GM12878 (cell line): ENCODE measurements at regions of chr17 and their contacts with region 1.

Region 1: GRCh38 chr17:45307290-45308015 is 9.4 kb downstream of the MAP3K14 start:
- DNase-seq: peak; percentile 90
- ATAC-seq: peak; percentile 64
- H3K4me3 ChIP-seq: peak overlapping the region; percentile 14; the same call in 1 of the 2 replicates
- H3K27ac ChIP-seq: peak overlapping the region; percentile 94
- H3K4me1 ChIP-seq: peaks cover 82% of the 10 kb centered on the region
- H3K27me3 ChIP-seq: no peaks in the 10 kb centered on the region
- CTCF ChIP-seq: 0 out of 6 replicates have a peak, but pooled peaks of 1 of the 3 experiments have one; percentile 5
- EP300 ChIP-seq: peak; percentile 75 to 78; a peak in 3 of 4 replicates
- POLR2A ChIP-seq: no peak
- RAD21 ChIP-seq: no peak

Region 2: DNA sequence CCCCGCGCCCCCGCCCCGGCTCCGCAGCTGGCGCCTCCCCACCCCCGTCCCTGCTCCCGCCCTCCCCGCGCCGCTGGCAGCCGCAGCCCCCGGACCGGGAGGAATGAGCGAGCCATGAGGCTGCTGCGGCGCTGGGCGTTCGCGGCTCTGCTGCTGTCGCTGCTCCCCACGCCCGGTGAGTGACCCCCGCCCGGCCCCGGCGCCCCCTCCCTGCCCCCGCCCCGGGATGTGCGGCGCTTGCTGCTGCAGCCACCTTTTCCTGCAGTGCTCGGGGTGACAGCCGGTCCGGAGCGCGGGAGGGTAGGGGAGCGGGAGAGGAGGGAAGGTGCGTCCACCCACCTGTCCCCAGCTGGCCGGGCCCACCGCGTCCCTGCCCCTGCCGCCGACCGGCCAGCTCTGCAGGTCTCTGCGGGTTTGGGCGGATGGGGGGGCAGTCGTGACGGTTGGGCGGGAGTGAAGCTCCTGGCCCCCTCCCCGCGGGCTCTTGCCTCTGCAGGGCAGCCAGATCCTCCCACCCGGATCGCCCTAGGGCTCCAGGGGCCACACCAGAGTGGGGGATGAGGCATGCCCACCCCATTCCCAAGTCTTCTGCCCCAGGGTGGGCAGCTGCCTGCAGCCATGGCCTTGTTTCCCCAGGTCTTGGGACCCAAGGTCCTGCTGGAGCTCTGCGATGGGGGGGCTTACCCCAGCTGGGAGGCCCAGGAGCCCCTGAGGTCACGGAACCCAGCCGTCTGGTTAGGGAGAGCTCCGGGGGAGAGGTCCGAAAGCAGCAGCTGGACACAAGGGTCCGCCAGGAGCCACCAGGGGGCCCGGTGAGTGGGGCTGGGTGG is 548.2 kb before region 1 on chr17:
- CTCF ChIA-PET with region 1: no interaction called
- POLR2A ChIA-PET with region 1: no interaction called
- RAD21 ChIA-PET with region 1: no interaction called
- SMC1A ChIA-PET with region 1: no interaction called
- in situ Hi-C with region 1: no loop called
- intact Hi-C with region 1: no loop called
- DNase-seq: no peak
- ATAC-seq: no peak
- H3K4me3 ChIP-seq: no peak overlapping the region
- H3K27ac ChIP-seq: no peak overlapping the region
- H3K4me1 ChIP-seq: no peaks in the 10 kb centered on the region
- H3K27me3 ChIP-seq: peaks cover 1 to 4% of the 10 kb centered on the region in 2 experiments; a peak in 3 of 4 replicates
- CTCF ChIP-seq: no peak
- EP300 ChIP-seq: no peak
- POLR2A ChIP-seq: no peak
- RAD21 ChIP-seq: no peak

Region 3: GRCh38 chr17:45006927-45007461 is 300.5 kb before region 1 on chr17:
- CTCF ChIA-PET with region 1: no interaction called
- POLR2A ChIA-PET with region 1: no interaction called
- RAD21 ChIA-PET with region 1: no interaction called
- SMC1A ChIA-PET with region 1: no interaction called
- in situ Hi-C with region 1: no loop called
- intact Hi-C with region 1: no loop called
- DNase-seq: no peak
- ATAC-seq: no peak
- H3K4me3 ChIP-seq: no peak overlapping the region
- H3K27ac ChIP-seq: no peak overlapping the region
- H3K4me1 ChIP-seq: no peaks in the 10 kb centered on the region
- H3K27me3 ChIP-seq: no peaks in the 10 kb centered on the region
- CTCF ChIP-seq: no peak
- EP300 ChIP-seq: no peak
- POLR2A ChIP-seq: no peak
- RAD21 ChIP-seq: no peak

Region 4: DNA sequence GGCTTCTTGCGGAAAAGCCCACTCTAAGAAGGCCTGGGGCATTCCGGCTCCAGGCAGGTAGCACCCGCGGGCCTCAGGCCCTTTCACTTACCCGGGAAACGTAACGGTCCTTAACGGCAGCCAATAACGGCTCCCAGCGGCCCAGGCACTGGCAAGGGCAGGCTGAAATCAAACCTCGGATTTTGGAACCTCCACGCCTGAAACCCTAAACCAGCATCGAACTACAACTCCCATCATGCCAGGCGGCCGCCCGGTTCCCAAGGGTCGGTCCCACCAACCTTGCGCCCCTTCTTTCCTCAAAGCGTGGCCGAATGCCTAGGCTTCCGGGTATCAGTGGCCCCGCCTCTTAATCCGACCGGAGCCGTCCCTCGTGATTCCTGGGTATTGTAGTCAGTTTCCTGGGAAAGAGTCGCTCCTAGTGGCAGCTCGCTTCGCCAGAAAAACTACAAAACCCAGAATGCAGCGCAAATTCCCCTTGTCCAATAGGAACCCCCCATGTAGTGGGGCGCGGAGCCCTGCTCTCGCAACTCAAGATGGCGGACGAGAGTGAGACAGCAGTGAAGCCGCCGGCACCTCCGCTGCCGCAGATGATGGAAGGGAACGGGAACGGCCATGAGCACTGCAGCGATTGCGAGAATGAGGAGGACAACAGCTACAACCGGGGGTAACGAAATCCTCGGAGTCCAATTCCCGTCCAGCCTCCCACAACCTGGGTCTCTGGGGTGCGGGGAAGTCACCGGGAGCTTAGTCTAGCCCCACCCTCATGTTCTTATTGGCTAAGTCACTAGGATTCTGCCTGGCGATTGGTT is 246.5 kb before region 1 on chr17 and contains the start of gene NMT1:
- CTCF ChIA-PET with region 1: no interaction called
- POLR2A ChIA-PET with region 1: no interaction called
- RAD21 ChIA-PET with region 1: no interaction called
- SMC1A ChIA-PET with region 1: no interaction called
- in situ Hi-C with region 1: no loop called
- intact Hi-C with region 1: no loop called
- DNase-seq: peak; percentile 99
- ATAC-seq: peak; percentile 90
- H3K4me3 ChIP-seq: peak within 1 kb of the TSS; percentile 84
- H3K27ac ChIP-seq: peak within 1 kb of the TSS; percentile 98
- H3K4me1 ChIP-seq: peaks cover 10% of the 10 kb centered on the region
- H3K27me3 ChIP-seq: no peaks in the 10 kb centered on the region
- CTCF ChIP-seq: no peak
- EP300 ChIP-seq: no peak
- POLR2A ChIP-seq: peak; percentile 98
- RAD21 ChIP-seq: no peak
- polyA plus RNA-seq, gene NMT1: 282 to 342 TPM

Region 5: DNA sequence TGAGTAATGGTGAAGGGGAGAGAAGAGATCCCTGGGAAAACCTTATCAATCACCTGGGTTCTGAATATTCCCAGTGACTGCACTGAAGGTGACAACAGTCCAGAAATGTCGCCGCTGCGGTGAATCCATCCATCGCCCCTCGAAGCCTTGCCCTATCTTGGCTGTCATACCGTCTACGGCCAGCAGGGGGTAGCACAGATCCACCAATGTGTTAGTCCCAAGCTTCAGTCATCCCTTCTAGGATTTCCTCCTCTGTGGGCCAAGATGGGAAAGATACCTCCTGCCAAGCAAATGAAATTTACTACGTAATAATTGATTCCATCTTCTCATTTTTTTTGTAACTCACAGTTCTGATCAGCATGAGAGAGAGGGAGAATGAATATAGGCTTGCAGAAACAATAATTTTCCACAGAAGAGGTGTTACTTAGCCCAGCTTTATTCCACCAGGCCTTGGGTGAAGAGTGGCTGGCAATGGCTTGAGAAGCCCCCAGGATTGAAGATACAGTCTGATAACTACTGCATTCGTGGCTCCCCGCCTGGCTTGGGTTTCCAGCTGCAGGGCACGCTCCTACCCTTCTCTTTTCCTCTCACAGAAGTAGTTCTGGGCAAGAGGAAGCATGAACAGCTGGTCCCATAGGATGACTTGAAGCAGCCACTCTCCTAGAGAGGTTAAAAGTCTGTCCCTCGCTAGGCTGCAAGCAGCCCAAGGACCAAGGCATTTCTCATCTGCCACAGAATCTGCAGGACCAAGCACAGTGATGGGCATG is 88.4 kb before region 1 on chr17:
- CTCF ChIA-PET with region 1: interaction called, 26 read pairs
- POLR2A ChIA-PET with region 1: interaction called, 140 read pairs
- RAD21 ChIA-PET with region 1: interaction called, 6 read pairs
- SMC1A ChIA-PET with region 1: interaction called, 21 read pairs
- in situ Hi-C with region 1: no loop called
- intact Hi-C with region 1: no loop called
- DNase-seq: no peak
- ATAC-seq: peak; percentile 42
- H3K4me3 ChIP-seq: no peak overlapping the region
- H3K27ac ChIP-seq: no peak overlapping the region
- H3K4me1 ChIP-seq: peaks cover 13% of the 10 kb centered on the region
- H3K27me3 ChIP-seq: no peaks in the 10 kb centered on the region
- CTCF ChIP-seq: peak; percentile 92 to 97 (median 94)
- EP300 ChIP-seq: no peak
- POLR2A ChIP-seq: no peak
- RAD21 ChIP-seq: peak; percentile 97

Region 6: GRCh38 chr17:45270828-45271418 is 36.5 kb before region 1 on chr17:
- CTCF ChIA-PET with region 1: interaction called, 194 read pairs
- POLR2A ChIA-PET with region 1: interaction called, 19 read pairs
- RAD21 ChIA-PET with region 1: interaction called, 3 read pairs
- SMC1A ChIA-PET with region 1: interaction called, 75 read pairs
- in situ Hi-C with region 1: no loop called
- intact Hi-C with region 1: no loop called
- DNase-seq: no peak
- ATAC-seq: peak; percentile 80
- H3K4me3 ChIP-seq: no peak overlapping the region
- H3K27ac ChIP-seq: no peak overlapping the region
- H3K4me1 ChIP-seq: 0 out of 2 replicates have a peak, but pooled peaks cover 4% of the 10 kb centered on the region
- H3K27me3 ChIP-seq: no peaks in the 10 kb centered on the region
- CTCF ChIP-seq: peak; percentile 45 to 82 (median 62)
- EP300 ChIP-seq: no peak
- POLR2A ChIP-seq: no peak
- RAD21 ChIP-seq: peak; percentile 44

Region 7: DNA sequence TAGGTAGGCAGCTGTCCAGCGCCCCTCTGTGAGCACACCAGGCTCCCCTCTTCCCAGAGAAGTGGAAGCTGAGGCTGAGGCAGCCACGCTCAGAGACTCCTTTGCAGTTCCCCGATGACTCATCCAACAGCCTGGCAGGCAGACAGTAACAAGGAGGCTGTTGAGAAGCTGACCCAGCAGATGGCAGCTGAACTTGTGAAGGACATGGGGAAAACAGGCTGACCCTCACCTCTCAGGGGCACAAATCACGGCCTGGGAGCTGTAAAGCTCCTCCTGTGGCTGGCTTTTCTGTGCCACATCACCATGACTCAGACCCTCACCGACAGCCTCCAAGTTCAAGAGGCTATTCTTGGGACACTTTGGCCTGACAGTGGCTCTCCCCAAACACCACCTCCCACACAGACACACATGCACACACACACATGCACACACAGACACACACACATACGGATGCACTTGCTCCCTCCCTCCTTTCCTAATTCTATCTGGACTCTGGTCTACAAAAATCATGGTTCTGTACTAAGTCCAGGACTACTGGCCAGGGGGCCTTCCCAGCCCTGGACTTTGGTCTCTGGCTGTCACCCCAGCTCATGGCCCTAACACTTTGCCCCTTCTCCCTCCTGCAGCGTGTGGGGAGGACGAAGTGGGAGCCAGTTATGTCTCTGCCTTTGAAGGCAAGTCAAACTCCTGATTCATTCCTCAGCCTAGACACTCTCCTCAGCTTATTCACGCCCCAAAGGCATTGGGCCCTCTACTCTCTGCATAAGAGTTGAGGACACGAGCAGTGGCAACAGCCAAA is 13.8 kb before region 1 on chr17:
- CTCF ChIA-PET with region 1: interaction called, 103 read pairs
- POLR2A ChIA-PET with region 1: interaction called, 203 read pairs
- RAD21 ChIA-PET with region 1: interaction called, 216 read pairs
- SMC1A ChIA-PET with region 1: interaction called, 171 read pairs
- in situ Hi-C with region 1: no loop called
- intact Hi-C with region 1: no loop called
- DNase-seq: no peak
- ATAC-seq: peak; percentile 63
- H3K4me3 ChIP-seq: no peak overlapping the region
- H3K27ac ChIP-seq: peak overlapping the region; percentile 42
- H3K4me1 ChIP-seq: peaks cover 76% of the 10 kb centered on the region
- H3K27me3 ChIP-seq: no peaks in the 10 kb centered on the region
- CTCF ChIP-seq: peak in 1 of 3 experiments; percentile 11; a peak in 1 of 6 replicates
- EP300 ChIP-seq: no peak
- POLR2A ChIP-seq: no peak
- RAD21 ChIP-seq: no peak

Region 8: DNA sequence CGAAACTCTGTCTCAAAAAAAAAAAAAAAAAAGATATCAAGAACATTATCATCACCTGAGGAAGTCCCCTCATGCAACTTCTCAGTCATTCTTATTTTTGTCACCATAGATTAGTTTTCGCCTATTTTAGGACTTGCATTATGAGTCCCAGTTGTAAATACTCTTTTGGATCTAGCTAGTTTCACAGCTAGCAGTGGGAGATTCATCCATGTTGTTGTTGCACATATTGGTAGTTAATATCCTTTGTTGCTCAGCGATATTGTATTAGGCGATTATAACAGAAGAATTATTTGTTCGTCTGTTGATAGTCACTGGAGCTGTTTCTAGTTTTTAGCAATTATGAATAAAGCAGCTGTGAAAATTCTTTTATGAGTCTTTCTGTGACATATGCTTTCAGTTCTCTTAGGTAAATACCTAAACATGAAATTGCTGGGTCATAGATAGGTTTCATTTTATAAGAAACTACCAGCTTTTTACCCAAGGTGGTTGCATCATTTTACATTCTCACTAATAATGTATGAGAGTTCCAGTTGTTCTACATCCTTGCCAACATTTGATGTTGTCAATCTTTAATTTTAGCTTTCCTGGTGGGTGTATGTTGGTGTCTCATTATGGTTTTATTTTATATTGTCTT is 50.0 kb after region 1 on chr17:
- CTCF ChIA-PET with region 1: interaction called, 4 read pairs
- POLR2A ChIA-PET with region 1: interaction called, 10 read pairs
- RAD21 ChIA-PET with region 1: interaction called, 15 read pairs
- SMC1A ChIA-PET with region 1: interaction called, 13 read pairs
- in situ Hi-C with region 1: no loop called
- intact Hi-C with region 1: no loop called
- DNase-seq: peak; percentile 63
- ATAC-seq: peak; percentile 80
- H3K4me3 ChIP-seq: no peak overlapping the region
- H3K27ac ChIP-seq: peak overlapping the region; percentile 91
- H3K4me1 ChIP-seq: peaks cover 23% of the 10 kb centered on the region
- H3K27me3 ChIP-seq: no peaks in the 10 kb centered on the region
- CTCF ChIP-seq: no peak
- EP300 ChIP-seq: peak; percentile 24 to 40; a peak in 1 of 4 replicates
- POLR2A ChIP-seq: no peak
- RAD21 ChIP-seq: peak; percentile 14; the same call in 1 of the 2 replicates

Region 9: GRCh38 chr17:45451141-45451540 is 143.7 kb after region 1 on chr17:
- CTCF ChIA-PET with region 1: no interaction called
- POLR2A ChIA-PET with region 1: no interaction called
- RAD21 ChIA-PET with region 1: no interaction called
- SMC1A ChIA-PET with region 1: no interaction called
- in situ Hi-C with region 1: no loop called
- intact Hi-C with region 1: no loop called
- DNase-seq: no peak
- ATAC-seq: peak; percentile 59; the same call in 2 of the 3 replicates
- H3K4me3 ChIP-seq: no peak overlapping the region
- H3K27ac ChIP-seq: no peak overlapping the region
- H3K4me1 ChIP-seq: 0 out of 2 replicates have a peak, but pooled peaks cover 5% of the 10 kb centered on the region
- H3K27me3 ChIP-seq: no peaks in the 10 kb centered on the region
- CTCF ChIP-seq: peak in 1 of 3 experiments; percentile 14; a peak in 2 of 6 replicates
- EP300 ChIP-seq: no peak
- POLR2A ChIP-seq: no peak
- RAD21 ChIP-seq: no peak